Naive thymus-derived CD4-positive, alpha-beta T cell (primary cell): ENCODE measurements at regions of chr1 and their contacts with region 1.

Region 1: DNA sequence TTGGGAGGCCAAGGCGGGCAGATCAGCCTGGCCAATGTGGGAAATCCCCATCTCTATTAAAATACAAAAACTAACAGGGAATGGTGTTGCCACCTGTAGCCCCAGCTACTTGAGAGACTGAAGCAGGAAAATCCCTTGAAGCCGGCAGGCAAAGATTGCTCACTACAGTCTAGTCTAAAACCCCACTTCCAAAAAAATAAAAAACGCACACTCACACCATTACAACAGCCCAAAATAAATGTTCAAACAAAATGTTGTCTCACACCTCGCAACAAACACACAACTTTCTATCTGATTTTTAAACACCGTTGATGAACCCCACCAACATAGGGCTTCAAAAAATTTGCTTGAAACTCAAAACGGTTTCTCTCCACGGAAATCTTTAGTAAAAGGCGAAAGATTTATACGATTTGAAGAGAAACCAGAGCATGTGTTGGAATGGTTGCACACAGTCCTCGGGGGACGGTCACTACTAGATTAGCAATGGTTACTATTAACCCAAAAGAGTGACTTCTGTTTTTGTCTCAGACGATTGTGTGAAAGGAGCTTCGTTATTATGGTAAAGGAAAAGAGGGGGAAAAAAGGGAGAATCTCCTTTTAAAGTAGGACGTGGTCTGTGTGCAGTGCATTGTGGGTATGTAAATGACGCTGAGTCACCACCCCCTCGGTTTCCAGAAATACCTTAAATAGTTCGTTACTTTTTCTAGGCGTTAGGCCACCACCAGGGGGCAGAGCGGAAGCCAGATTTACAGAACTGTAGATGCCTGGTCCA is at the start of gene RNU5D-1:
- DNase-seq: peak; percentile 77 to 92 (median 89)
- ATAC-seq: peak; percentile 85
- H3K4me3 ChIP-seq: peak within 1 kb of the TSS; percentile 18
- H3K4me3 Mint-ChIP-seq: peak within 1 kb of the TSS; percentile 54 to 93 (median 84)
- H3K27ac ChIP-seq: peak within 1 kb of the TSS; percentile 86
- H3K27ac Mint-ChIP-seq: peak within 1 kb of the TSS; percentile 97 to 100 (median 98)
- H3K4me1 ChIP-seq: peaks cover 10 to 13% of the 10 kb centered on the region in 2 donors
- H3K4me1 Mint-ChIP-seq: peaks cover 14 to 58% (median 43%) of the 10 kb centered on the region in 7 donors
- H3K27me3 ChIP-seq: no peaks in the 10 kb centered on the region
- H3K27me3 Mint-ChIP-seq: no peaks in the 10 kb centered on the region
- total RNA-seq, gene RNU5D-1: not detected

Region 2: GRCh38 chr1:44631647-44632539 is 99.0 kb before region 1 on chr1:
- CTCF ChIA-PET with region 1: interaction called, 4 read pairs
- POLR2A ChIA-PET with region 1: no interaction called
- intact Hi-C with region 1: loop called in 1 of 2 experiments (anchors 2 kb)
- DNase-seq: peak; percentile 80 to 92 (median 87)
- ATAC-seq: peak; percentile 87
- H3K4me3 ChIP-seq: peak overlapping the region; percentile 70
- H3K4me3 Mint-ChIP-seq: peak overlapping the region; percentile 69 to 95 (median 90)
- H3K27ac ChIP-seq: peak overlapping the region; percentile 85
- H3K27ac Mint-ChIP-seq: peak overlapping the region; percentile 46 to 99 (median 97)
- H3K4me1 ChIP-seq: peaks cover 8 to 13% of the 10 kb centered on the region in 2 donors
- H3K4me1 Mint-ChIP-seq: peaks cover 26 to 50% (median 39%) of the 10 kb centered on the region in 7 donors
- H3K27me3 ChIP-seq: no peaks in the 10 kb centered on the region
- H3K27me3 Mint-ChIP-seq: no peaks in the 10 kb centered on the region

Region 3: GRCh38 chr1:44786138-44786840 is 55.4 kb after region 1 on chr1:
- CTCF ChIA-PET with region 1: interaction called, 16 read pairs
- POLR2A ChIA-PET with region 1: interaction called, 16 read pairs
- intact Hi-C with region 1: loop called in 1 of 2 experiments (anchors 1 kb)
- DNase-seq: peak; percentile 69 to 85 (median 76)
- ATAC-seq: peak; percentile 90
- H3K4me3 ChIP-seq: peak overlapping the region; percentile 64
- H3K4me3 Mint-ChIP-seq: peak overlapping the region; percentile 60 to 82 (median 75)
- H3K27ac ChIP-seq: peak overlapping the region; percentile 58
- H3K27ac Mint-ChIP-seq: peak overlapping the region in 8 of 9 donors; percentile 51 to 80 (median 72)
- H3K4me1 ChIP-seq: peaks cover 20 to 25% of the 10 kb centered on the region in 2 donors
- H3K4me1 Mint-ChIP-seq: peaks cover 13 to 35% (median 27%) of the 10 kb centered on the region in 7 donors
- H3K27me3 ChIP-seq: no peaks in the 10 kb centered on the region
- H3K27me3 Mint-ChIP-seq: no peaks in the 10 kb centered on the region

Region 4: GRCh38 chr1:44807262-44808062 is 76.5 kb after region 1 on chr1 and contains the start of gene DYNLT4:
- CTCF ChIA-PET with region 1: interaction called, 3 read pairs
- POLR2A ChIA-PET with region 1: interaction called, 27 read pairs
- intact Hi-C with region 1: loop called in 1 of 2 experiments (anchors 2 kb)
- DNase-seq: peak; percentile 78 to 96 (median 95)
- ATAC-seq: peak; percentile 68
- H3K4me3 ChIP-seq: peak within 1 kb of the TSS; percentile 48
- H3K4me3 Mint-ChIP-seq: peak within 1 kb of the TSS; percentile 63 to 90 (median 80)
- H3K27ac ChIP-seq: peak within 1 kb of the TSS; percentile 91
- H3K27ac Mint-ChIP-seq: peak within 1 kb of the TSS; percentile 98 to 100 (median 99)
- H3K4me1 ChIP-seq: peaks cover 66 to 67% of the 10 kb centered on the region in 2 donors
- H3K4me1 Mint-ChIP-seq: peaks cover 53 to 84% (median 77%) of the 10 kb centered on the region in 7 donors
- H3K27me3 ChIP-seq: no peaks in the 10 kb centered on the region
- H3K27me3 Mint-ChIP-seq: peaks cover 0 to 3% (median 0%) of the 10 kb centered on the region in 5 donors
- total RNA-seq, gene DYNLT4: 0.31 to 9.7 (median 0.87) TPM

Region 5: GRCh38 chr1:44819608-44820327 is 88.8 kb after region 1 on chr1:
- CTCF ChIA-PET with region 1: interaction called, 5 read pairs
- POLR2A ChIA-PET with region 1: interaction called, 50 read pairs
- intact Hi-C with region 1: loop called (anchors 1 kb)
- DNase-seq: peak; percentile 75 to 91 (median 86)
- ATAC-seq: peak; percentile 86
- H3K4me3 ChIP-seq: peak overlapping the region; percentile 66
- H3K4me3 Mint-ChIP-seq: peak overlapping the region; percentile 91 to 96 (median 94)
- H3K27ac ChIP-seq: peak overlapping the region; percentile 92
- H3K27ac Mint-ChIP-seq: peak overlapping the region; percentile 99 to 100 (median 100)
- H3K4me1 ChIP-seq: peaks cover 0 to 21% of the 10 kb centered on the region in 2 donors
- H3K4me1 Mint-ChIP-seq: peaks cover 31 to 48% (median 45%) of the 10 kb centered on the region in 7 donors
- H3K27me3 ChIP-seq: no peaks in the 10 kb centered on the region
- H3K27me3 Mint-ChIP-seq: no peaks in the 10 kb centered on the region

Region 6: GRCh38 chr1:45134468-45134873 is 403.5 kb after region 1 on chr1:
- CTCF ChIA-PET with region 1: no interaction called
- POLR2A ChIA-PET with region 1: no interaction called
- intact Hi-C with region 1: no loop called
- DNase-seq: no peak
- ATAC-seq: no peak
- H3K4me3 ChIP-seq: no peak overlapping the region
- H3K4me3 Mint-ChIP-seq: no peak overlapping the region
- H3K27ac ChIP-seq: no peak overlapping the region
- H3K27ac Mint-ChIP-seq: no peak overlapping the region
- H3K4me1 ChIP-seq: no peaks in the 10 kb centered on the region
- H3K4me1 Mint-ChIP-seq: peaks cover 0 to 12% (median 5%) of the 10 kb centered on the region in 7 donors
- H3K27me3 ChIP-seq: no peaks in the 10 kb centered on the region
- H3K27me3 Mint-ChIP-seq: no peaks in the 10 kb centered on the region

Region 7: GRCh38 chr1:45499415-45499769 is 768.5 kb after region 1 on chr1:
- CTCF ChIA-PET with region 1: interaction called, 4 read pairs
- POLR2A ChIA-PET with region 1: no interaction called
- intact Hi-C with region 1: loop called in 1 of 2 experiments (anchors 2 kb)
- DNase-seq: peak in 1 of 9 donors; percentile 17
- ATAC-seq: no peak
- H3K4me3 ChIP-seq: peak overlapping the region; percentile 68
- H3K4me3 Mint-ChIP-seq: peak overlapping the region; percentile 91 to 99 (median 94)
- H3K27ac ChIP-seq: peak overlapping the region; percentile 70
- H3K27ac Mint-ChIP-seq: peak overlapping the region; percentile 87 to 97 (median 92)
- H3K4me1 ChIP-seq: peaks cover 5 to 17% of the 10 kb centered on the region in 2 donors
- H3K4me1 Mint-ChIP-seq: peaks cover 24 to 38% (median 33%) of the 10 kb centered on the region in 7 donors
- H3K27me3 ChIP-seq: no peaks in the 10 kb centered on the region
- H3K27me3 Mint-ChIP-seq: no peaks in the 10 kb centered on the region